Mammary epithelial cell (primary cell): ENCODE measurements at regions of chr13 and their contacts with region 1.

Region 1: GRCh38 chr13:46071590-46072249 is 19.2 kb upstream of the ZC3H13 start:
- DNase-seq: no peak
- H3K4me3 ChIP-seq: no peak overlapping the region
- H3K27ac ChIP-seq: no peak overlapping the region
- H3K4me1 ChIP-seq: no peaks in the 10 kb centered on the region
- H3K27me3 ChIP-seq: no peaks in the 10 kb centered on the region
- CTCF ChIP-seq: no peak

Region 2: DNA sequence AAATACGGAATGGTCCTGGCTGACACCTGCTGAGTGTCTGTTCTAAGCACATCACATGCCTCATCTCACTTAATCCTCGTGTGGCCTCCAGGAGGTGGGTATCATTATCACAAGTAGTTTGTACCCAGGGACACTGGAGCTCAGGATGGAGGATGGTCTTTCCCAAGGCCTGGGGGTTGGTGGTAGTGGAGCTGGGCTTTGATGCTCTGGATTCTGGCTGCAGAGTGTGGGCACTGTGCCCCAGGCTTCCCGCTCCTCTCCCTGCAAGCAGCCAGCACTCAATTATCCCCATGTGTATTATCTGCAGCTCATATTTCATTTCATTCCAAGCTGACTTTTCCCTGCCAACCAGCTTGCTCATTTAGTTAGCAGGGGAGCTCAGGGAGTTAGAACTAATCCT is 272.3 kb before region 1 on chr13:
- CTCF ChIA-PET with region 1: no interaction called
- dilution Hi-C with region 1: no loop called
- in situ Hi-C with region 1: no loop called
- intact Hi-C with region 1: no loop called
- DNase-seq: no peak
- H3K4me3 ChIP-seq: no peak overlapping the region
- H3K27ac ChIP-seq: no peak overlapping the region
- H3K4me1 ChIP-seq: no peaks in the 10 kb centered on the region
- H3K27me3 ChIP-seq: no peaks in the 10 kb centered on the region
- CTCF ChIP-seq: no peak

Region 3: DNA sequence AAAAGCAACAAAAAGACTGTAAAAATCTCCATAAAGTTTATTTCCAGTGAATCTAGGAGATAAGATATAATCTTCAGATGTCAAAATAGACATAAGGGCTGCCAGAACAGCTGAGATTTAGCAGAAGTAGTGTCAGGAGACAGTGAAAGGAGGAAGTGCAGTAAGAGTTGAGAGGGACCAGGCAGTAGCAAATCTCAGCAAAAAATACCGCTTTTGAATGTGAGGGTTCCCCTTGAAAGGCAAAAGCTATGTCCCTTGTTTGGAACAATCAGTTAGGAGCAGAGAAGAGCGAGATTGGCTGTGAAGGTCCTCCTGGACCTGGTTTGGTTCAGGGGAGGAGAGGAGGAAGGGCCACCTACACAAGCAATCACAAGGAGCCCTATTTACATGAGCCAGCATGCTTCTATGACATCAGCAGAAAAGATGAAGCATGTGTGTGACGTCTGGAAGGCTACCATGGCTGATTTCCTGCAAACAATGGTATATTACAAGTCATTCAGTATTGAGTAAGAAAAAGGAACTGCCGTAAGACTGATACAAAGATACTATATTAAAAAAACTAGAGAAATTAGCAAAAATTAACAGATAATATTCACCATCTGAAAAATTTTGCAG is 121.2 kb before region 1 on chr13:
- CTCF ChIA-PET with region 1: no interaction called
- dilution Hi-C with region 1: no loop called
- in situ Hi-C with region 1: no loop called
- intact Hi-C with region 1: no loop called
- DNase-seq: no peak
- H3K4me3 ChIP-seq: no peak overlapping the region
- H3K27ac ChIP-seq: no peak overlapping the region
- H3K4me1 ChIP-seq: no peaks in the 10 kb centered on the region
- H3K27me3 ChIP-seq: no peaks in the 10 kb centered on the region
- CTCF ChIP-seq: no peak

Region 4: GRCh38 chr13:46022481-46022880 is 49.2 kb before region 1 on chr13:
- CTCF ChIA-PET with region 1: no interaction called
- dilution Hi-C with region 1: loop called (anchors 5 kb)
- in situ Hi-C with region 1: no loop called
- intact Hi-C with region 1: no loop called
- DNase-seq: no peak
- H3K4me3 ChIP-seq: no peak overlapping the region
- H3K27ac ChIP-seq: no peak overlapping the region
- H3K4me1 ChIP-seq: no peaks in the 10 kb centered on the region
- H3K27me3 ChIP-seq: no peaks in the 10 kb centered on the region
- CTCF ChIP-seq: no peak